WTC11 (cell line): ENCODE measurements at regions of chr12 and their contacts with region 1.

Region 1: GRCh38 chr12:62813031-62813829 is 121.7 kb downstream of the PPM1H start:
- DNase-seq: peak; percentile 58
- ATAC-seq: peak; percentile 86
- H3K4me3 Mint-ChIP-seq: no peak overlapping the region
- H3K27ac Mint-ChIP-seq: no peak overlapping the region
- H3K4me1 Mint-ChIP-seq: peaks cover 16% of the 10 kb centered on the region
- H3K27me3 Mint-ChIP-seq: no peaks in the 10 kb centered on the region
- CTCF ChIP-seq: peak; percentile 41; the same call in 1 of the 2 replicates

Region 2: GRCh38 chr12:62799126-62799736 is 14.0 kb before region 1 on chr12:
- CTCF ChIA-PET with region 1: interaction called, 12 read pairs
- POLR2A ChIA-PET with region 1: no interaction called
- DNase-seq: peak; percentile 81
- ATAC-seq: peak; percentile 85
- H3K4me3 Mint-ChIP-seq: no peak overlapping the region
- H3K27ac Mint-ChIP-seq: no peak overlapping the region
- H3K4me1 Mint-ChIP-seq: peaks cover 28% of the 10 kb centered on the region
- H3K27me3 Mint-ChIP-seq: no peaks in the 10 kb centered on the region
- CTCF ChIP-seq: peak; percentile 88

Region 3: GRCh38 chr12:62827042-62827441 is 13.8 kb after region 1 on chr12:
- CTCF ChIA-PET with region 1: no interaction called
- POLR2A ChIA-PET with region 1: no interaction called
- DNase-seq: no peak
- ATAC-seq: peak; percentile 87
- H3K4me3 Mint-ChIP-seq: no peak overlapping the region
- H3K27ac Mint-ChIP-seq: no peak overlapping the region
- H3K4me1 Mint-ChIP-seq: no peaks in the 10 kb centered on the region
- H3K27me3 Mint-ChIP-seq: no peaks in the 10 kb centered on the region
- CTCF ChIP-seq: no peak